ENCODE measurements at regions of chr3 and their contacts with region 1.

Region 1: DNA sequence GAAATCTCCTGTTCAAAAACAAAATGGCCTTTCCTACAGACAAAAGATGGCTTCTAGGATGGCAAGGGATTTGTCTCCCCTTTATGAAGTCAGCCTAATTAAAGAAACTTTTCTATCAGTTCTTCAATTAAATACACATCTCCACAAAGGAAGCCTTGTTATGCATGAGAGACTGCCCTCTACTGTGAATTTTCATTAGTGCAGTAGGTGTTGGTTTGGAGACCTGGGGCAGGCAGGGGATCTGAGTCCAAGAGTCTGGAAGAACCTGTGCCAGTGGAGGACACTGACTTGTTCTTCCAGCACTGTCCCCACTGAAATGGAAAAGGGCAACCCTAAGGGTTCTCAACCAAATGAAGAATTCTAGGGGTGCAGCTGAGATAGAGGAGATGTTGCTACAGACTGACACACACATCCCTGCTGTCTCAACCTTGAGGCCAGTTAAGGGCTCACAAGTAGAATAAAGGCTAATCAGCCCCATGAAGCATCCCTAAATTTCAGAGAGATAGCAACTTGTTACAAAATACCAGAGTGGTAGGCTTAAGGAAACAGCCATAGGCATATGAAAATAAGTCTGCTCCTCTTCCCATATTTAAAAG is 174.0 kb upstream of the PRICKLE2 start:
- DNase-seq: no peak
- ATAC-seq: peak; percentile 77
- H3K4me3 ChIP-seq: no peak overlapping the region
- H3K27ac ChIP-seq: no peak overlapping the region
- H3K4me1 ChIP-seq: no peaks in the 10 kb centered on the region
- H3K27me3 ChIP-seq: no peaks in the 10 kb centered on the region
- CTCF ChIP-seq: peak; percentile 58 to 65 (median 60); a peak in 5 of 6 replicates
- EP300 ChIP-seq: no peak
- POLR2A ChIP-seq: no peak
- RAD21 ChIP-seq: peak; percentile 78

Region 2: GRCh38 chr3:64030741-64031140 is 368.6 kb before region 1 on chr3:
- CTCF ChIA-PET with region 1: interaction called, 6 read pairs
- POLR2A ChIA-PET with region 1: no interaction called
- RAD21 ChIA-PET with region 1: interaction called, 10 read pairs
- SMC1A ChIA-PET with region 1: interaction called, 11 read pairs
- in situ Hi-C with region 1: loop called (anchors 5 kb)
- intact Hi-C with region 1: loop called (anchors 1 kb)
- DNase-seq: peak; percentile 41
- ATAC-seq: peak; percentile 99
- H3K4me3 ChIP-seq: no peak overlapping the region; the same call in 1 of the 2 replicates
- H3K27ac ChIP-seq: no peak overlapping the region
- H3K4me1 ChIP-seq: no peaks in the 10 kb centered on the region; the same call in 1 of the 2 replicates
- H3K27me3 ChIP-seq: no peaks in the 10 kb centered on the region
- CTCF ChIP-seq: peak; percentile 79 to 97 (median 89); a peak in 5 of 6 replicates
- EP300 ChIP-seq: no peak
- POLR2A ChIP-seq: no peak
- RAD21 ChIP-seq: peak; percentile 97

Region 3: GRCh38 chr3:64321747-64322146 is 77.6 kb before region 1 on chr3:
- CTCF ChIA-PET with region 1: interaction called, 11 read pairs
- POLR2A ChIA-PET with region 1: no interaction called
- RAD21 ChIA-PET with region 1: interaction called, 4 read pairs
- SMC1A ChIA-PET with region 1: interaction called, 8 read pairs
- in situ Hi-C with region 1: no loop called
- intact Hi-C with region 1: no loop called
- DNase-seq: no peak
- ATAC-seq: no peak
- H3K4me3 ChIP-seq: no peak overlapping the region
- H3K27ac ChIP-seq: no peak overlapping the region
- H3K4me1 ChIP-seq: no peaks in the 10 kb centered on the region
- H3K27me3 ChIP-seq: no peaks in the 10 kb centered on the region
- CTCF ChIP-seq: no peak
- EP300 ChIP-seq: no peak
- POLR2A ChIP-seq: no peak
- RAD21 ChIP-seq: no peak

Region 4: DNA sequence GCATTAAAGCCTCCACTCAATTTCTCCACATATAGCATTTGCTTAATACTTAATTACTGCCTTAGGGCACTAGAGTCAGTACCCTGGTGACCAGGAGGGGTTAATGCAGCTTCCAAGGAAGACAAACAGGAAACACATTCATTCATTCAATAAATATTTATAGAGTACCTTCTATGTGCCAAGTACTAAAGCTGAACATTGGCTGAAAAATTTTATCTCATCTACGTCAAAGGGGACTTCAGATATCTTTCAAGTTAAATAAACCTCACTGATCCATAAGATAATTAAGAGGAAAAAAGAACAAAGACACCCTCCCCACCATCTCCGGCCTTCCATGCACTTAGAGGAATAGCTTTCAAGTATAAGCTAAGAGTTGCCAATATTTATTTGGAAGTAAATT is 17.1 kb before region 1 on chr3:
- CTCF ChIA-PET with region 1: no interaction called
- POLR2A ChIA-PET with region 1: interaction called, 4 read pairs
- RAD21 ChIA-PET with region 1: interaction called, 3 read pairs
- SMC1A ChIA-PET with region 1: interaction called, 19 read pairs
- in situ Hi-C with region 1: no loop called
- intact Hi-C with region 1: no loop called
- DNase-seq: no peak
- ATAC-seq: no peak
- H3K4me3 ChIP-seq: no peak overlapping the region
- H3K27ac ChIP-seq: no peak overlapping the region
- H3K4me1 ChIP-seq: no peaks in the 10 kb centered on the region
- H3K27me3 ChIP-seq: no peaks in the 10 kb centered on the region
- CTCF ChIP-seq: no peak
- EP300 ChIP-seq: no peak
- POLR2A ChIP-seq: no peak
- RAD21 ChIP-seq: no peak

Region 5: DNA sequence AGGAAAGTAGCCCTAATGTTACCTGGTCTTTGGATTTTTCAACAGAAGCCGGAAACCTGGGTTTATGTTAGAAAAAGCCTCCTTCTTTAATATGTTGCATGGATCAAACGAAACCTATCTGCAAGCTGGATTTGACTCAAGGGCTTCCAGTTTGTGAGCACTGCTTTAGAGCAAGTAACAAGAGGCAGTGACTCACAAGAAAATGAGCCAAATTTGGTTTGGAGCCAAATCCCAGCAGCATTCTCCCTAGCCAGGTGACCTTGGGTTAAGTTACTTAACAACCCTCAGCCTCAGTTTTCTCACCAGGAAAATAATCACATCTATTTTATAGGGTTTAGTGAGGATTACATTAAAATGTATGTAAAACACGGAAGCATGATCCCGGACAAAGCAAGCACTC is 41.2 kb after region 1 on chr3:
- CTCF ChIA-PET with region 1: interaction called, 4 read pairs
- POLR2A ChIA-PET with region 1: interaction called, 3 read pairs
- RAD21 ChIA-PET with region 1: interaction called, 8 read pairs
- SMC1A ChIA-PET with region 1: interaction called, 14 read pairs
- in situ Hi-C with region 1: no loop called
- intact Hi-C with region 1: no loop called
- DNase-seq: no peak
- ATAC-seq: no peak
- H3K4me3 ChIP-seq: no peak overlapping the region
- H3K27ac ChIP-seq: no peak overlapping the region
- H3K4me1 ChIP-seq: no peaks in the 10 kb centered on the region
- H3K27me3 ChIP-seq: peaks cover 3 to 4% of the 10 kb centered on the region in 2 experiments; a peak in 2 of 4 replicates
- CTCF ChIP-seq: no peak
- EP300 ChIP-seq: no peak
- POLR2A ChIP-seq: no peak
- RAD21 ChIP-seq: no peak

Region 6: GRCh38 chr3:64484289-64484992 is 85.1 kb after region 1 on chr3:
- CTCF ChIA-PET with region 1: interaction called, 14 read pairs
- POLR2A ChIA-PET with region 1: no interaction called
- RAD21 ChIA-PET with region 1: interaction called, 11 read pairs
- SMC1A ChIA-PET with region 1: interaction called, 25 read pairs
- in situ Hi-C with region 1: no loop called
- intact Hi-C with region 1: loop called (anchors 1 kb)
- DNase-seq: peak; percentile 45
- ATAC-seq: peak; percentile 99
- H3K4me3 ChIP-seq: no peak overlapping the region
- H3K27ac ChIP-seq: no peak overlapping the region
- H3K4me1 ChIP-seq: no peaks in the 10 kb centered on the region
- H3K27me3 ChIP-seq: peaks cover under 1 to 5% of the 10 kb centered on the region in 2 experiments; a peak in 1 of 4 replicates
- CTCF ChIP-seq: peak; percentile 76 to 94 (median 88); a peak in 5 of 6 replicates
- EP300 ChIP-seq: no peak
- POLR2A ChIP-seq: no peak
- RAD21 ChIP-seq: peak; percentile 98

Region 7: GRCh38 chr3:64642327-64643151 is 243.2 kb after region 1 on chr3:
- CTCF ChIA-PET with region 1: no interaction called
- POLR2A ChIA-PET with region 1: no interaction called
- RAD21 ChIA-PET with region 1: no interaction called
- SMC1A ChIA-PET with region 1: no interaction called
- in situ Hi-C with region 1: no loop called
- intact Hi-C with region 1: no loop called
- DNase-seq: no peak
- ATAC-seq: no peak
- H3K4me3 ChIP-seq: no peak overlapping the region
- H3K27ac ChIP-seq: no peak overlapping the region
- H3K4me1 ChIP-seq: no peaks in the 10 kb centered on the region
- H3K27me3 ChIP-seq: no peaks in the 10 kb centered on the region
- CTCF ChIP-seq: no peak
- EP300 ChIP-seq: no peak
- POLR2A ChIP-seq: no peak
- RAD21 ChIP-seq: no peak

Measured in GM12878 (cell line).